Heart right ventricle (tissue), 16 donors: ENCODE measurements at regions of chrX and their contacts with region 1.

Region 1: DNA sequence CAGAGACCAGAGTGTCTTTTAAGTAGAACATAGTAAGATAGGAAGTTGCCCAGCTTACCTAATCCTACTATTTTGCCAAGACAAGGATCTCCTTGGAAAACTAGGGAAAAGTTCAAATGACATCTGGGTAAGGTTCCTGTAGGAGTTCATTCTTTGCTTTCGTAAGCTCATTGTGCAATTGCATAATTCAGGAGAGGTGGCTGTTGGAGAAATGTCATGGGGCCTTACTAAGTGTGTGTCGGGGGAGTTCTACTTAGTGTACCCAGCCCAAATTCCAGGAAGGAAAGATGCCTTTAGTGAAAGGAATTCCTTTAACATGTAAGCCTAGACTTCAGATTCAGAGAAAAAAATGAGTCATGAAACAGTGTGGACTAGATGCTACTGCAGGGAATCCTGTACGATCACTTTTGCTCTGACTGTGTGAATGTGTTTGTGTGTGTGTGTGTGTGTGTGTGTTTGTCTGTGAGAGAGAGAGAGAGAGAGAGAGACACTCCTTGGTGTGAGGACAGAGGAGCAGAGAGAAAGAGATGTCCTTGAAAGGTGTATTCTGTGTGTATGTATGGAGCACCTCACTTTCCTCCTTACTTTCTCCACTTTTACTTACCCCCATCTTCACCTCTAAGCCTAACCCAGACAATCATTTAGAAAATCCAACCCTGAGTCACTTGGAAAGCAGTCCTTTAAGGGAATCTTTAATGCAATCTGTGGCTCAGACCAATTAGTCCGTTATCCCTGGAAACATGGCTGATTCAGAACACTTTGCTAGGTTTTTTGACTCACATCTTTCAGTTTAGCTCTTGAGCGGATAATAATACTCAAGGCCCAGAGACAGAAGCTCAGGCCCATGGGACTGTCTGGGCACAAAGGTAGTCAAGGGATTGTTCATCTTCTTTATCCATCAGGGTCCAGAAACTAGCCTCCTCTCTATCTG is 114.5 kb upstream of the ACSL4 start:
- DNase-seq: no peak
- ATAC-seq: peak in 4 of 8 donors; percentile 33 to 89 (median 40)
- H3K4me3 ChIP-seq: no peak overlapping the region
- H3K27ac ChIP-seq: peak overlapping the region in 2 of 10 donors; percentile 27 to 39
- H3K4me1 ChIP-seq: peaks cover 0 to 20% (median 0%) of the 10 kb centered on the region in 9 donors
- H3K27me3 ChIP-seq: peaks cover 0 to 19% (median 0%) of the 10 kb centered on the region in 7 donors
- CTCF ChIP-seq: no peak

Region 2: GRCh38 chrX:109578916-109579315 is 268.6 kb before region 1 on chrX:
- intact Hi-C with region 1: no loop called
- DNase-seq: no peak
- ATAC-seq: no peak
- H3K4me3 ChIP-seq: no peak overlapping the region
- H3K27ac ChIP-seq: no peak overlapping the region
- H3K4me1 ChIP-seq: no peaks in the 10 kb centered on the region
- H3K27me3 ChIP-seq: peaks cover 0 to 33% (median 0%) of the 10 kb centered on the region in 7 donors
- CTCF ChIP-seq: no peak

Region 3: DNA sequence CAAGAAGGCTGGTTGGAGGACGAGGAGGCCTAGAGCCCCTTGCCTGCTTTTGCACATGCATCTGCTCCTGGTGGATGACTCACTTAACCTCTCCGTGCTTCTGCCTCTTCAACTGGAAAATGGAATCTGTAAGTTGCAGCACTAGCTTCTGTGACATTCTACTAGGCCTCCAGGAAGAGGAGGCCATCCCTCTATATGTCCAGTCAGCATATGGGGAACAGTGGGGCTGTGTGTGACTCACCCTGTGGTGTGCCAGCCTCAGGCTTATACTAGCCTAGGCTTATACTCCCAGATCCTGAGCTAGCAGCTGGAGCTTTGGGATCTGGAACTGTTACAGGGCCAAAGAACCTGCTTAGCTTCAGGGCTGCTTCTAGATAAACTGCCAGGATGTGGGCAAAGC is 547.1 kb after region 1 on chrX:
- intact Hi-C with region 1: loop called in 1 of 10 experiments (anchors 5 kb)
- DNase-seq: no peak
- ATAC-seq: no peak
- H3K4me3 ChIP-seq: no peak overlapping the region
- H3K27ac ChIP-seq: no peak overlapping the region
- H3K4me1 ChIP-seq: no peaks in the 10 kb centered on the region
- H3K27me3 ChIP-seq: peaks cover 0 to 56% (median 0%) of the 10 kb centered on the region in 7 donors
- CTCF ChIP-seq: no peak